ENCODE measurements at regions of chr7 and their contacts with region 1.

Region 1: GRCh38 chr7:34133983-34134782 is 228.8 kb downstream of the BMPER start:
- DNase-seq: peak; percentile 63 to 72
- ATAC-seq: peak; percentile 75 to 87
- H3K4me3 ChIP-seq: no peak overlapping the region
- H3K27ac ChIP-seq: peak overlapping the region in 1 of 4 donors; percentile 3
- H3K4me1 ChIP-seq: peaks cover 11 to 22% of the 10 kb centered on the region in 2 donors
- H3K27me3 ChIP-seq: no peaks in the 10 kb centered on the region
- CTCF ChIP-seq: peak; percentile 76 to 82 (median 78)
- POLR2A ChIP-seq: no peak

Region 2: GRCh38 chr7:34048445-34048844 is 85.7 kb before region 1 on chr7:
- in situ Hi-C with region 1: no loop called
- intact Hi-C with region 1: no loop called
- DNase-seq: no peak
- ATAC-seq: no peak
- H3K4me3 ChIP-seq: no peak overlapping the region
- H3K27ac ChIP-seq: no peak overlapping the region
- H3K4me1 ChIP-seq: no peaks in the 10 kb centered on the region
- H3K27me3 ChIP-seq: no peaks in the 10 kb centered on the region
- CTCF ChIP-seq: no peak
- POLR2A ChIP-seq: no peak

Region 3: GRCh38 chr7:34165929-34166550 is 31.9 kb after region 1 on chr7:
- in situ Hi-C with region 1: no loop called
- intact Hi-C with region 1: loop called (anchors 1 kb)
- DNase-seq: no peak
- ATAC-seq: peak; percentile 68 to 79
- H3K4me3 ChIP-seq: no peak overlapping the region
- H3K27ac ChIP-seq: peak overlapping the region; percentile 79 to 92 (median 87)
- H3K4me1 ChIP-seq: peaks cover 16 to 21% of the 10 kb centered on the region in 2 donors
- H3K27me3 ChIP-seq: no peaks in the 10 kb centered on the region
- CTCF ChIP-seq: peak; percentile 72 to 89 (median 78)
- POLR2A ChIP-seq: no peak

Region 4: GRCh38 chr7:34321000-34321581 is 186.9 kb after region 1 on chr7:
- in situ Hi-C with region 1: loop called in 1 of 4 experiments (anchors 25 kb)
- intact Hi-C with region 1: no loop called
- DNase-seq: peak; percentile 10 to 37
- ATAC-seq: peak; percentile 85 to 91
- H3K4me3 ChIP-seq: no peak overlapping the region
- H3K27ac ChIP-seq: no peak overlapping the region
- H3K4me1 ChIP-seq: no peaks in the 10 kb centered on the region
- H3K27me3 ChIP-seq: no peaks in the 10 kb centered on the region
- CTCF ChIP-seq: peak; percentile 33 to 81 (median 60)
- POLR2A ChIP-seq: no peak